PC-9 (cell line): ENCODE measurements at regions of chr13 and their contacts with region 1.

Region 1: GRCh38 chr13:45047394-45048310 is 58.3 kb downstream of the GPALPP1 start:
- DNase-seq: peak; percentile 69 to 77
- H3K4me3 ChIP-seq: peak overlapping the region; percentile 22; the same call in 1 of the 2 replicates
- H3K27ac ChIP-seq: no peak overlapping the region
- H3K4me1 ChIP-seq: no peaks in the 10 kb centered on the region
- H3K27me3 ChIP-seq: no peaks in the 10 kb centered on the region
- CTCF ChIP-seq: peak; percentile 93

Region 2: GRCh38 chr13:45073809-45074208 is 26.2 kb after region 1 on chr13:
- CTCF ChIA-PET with region 1: no interaction called
- POLR2A ChIA-PET with region 1: no interaction called
- intact Hi-C with region 1: no loop called
- DNase-seq: no peak
- H3K4me3 ChIP-seq: no peak overlapping the region
- H3K27ac ChIP-seq: no peak overlapping the region
- H3K4me1 ChIP-seq: no peaks in the 10 kb centered on the region
- H3K27me3 ChIP-seq: no peaks in the 10 kb centered on the region
- CTCF ChIP-seq: no peak

Region 3: GRCh38 chr13:45119991-45120864 is 72.6 kb after region 1 on chr13 and contains the start of gene GTF2F2:
- CTCF ChIA-PET with region 1: interaction called, 3 read pairs
- POLR2A ChIA-PET with region 1: no interaction called
- intact Hi-C with region 1: loop called (anchors 1 kb)
- DNase-seq: peak; percentile 79 to 89
- H3K4me3 ChIP-seq: peak within 1 kb of the TSS; percentile 96
- H3K27ac ChIP-seq: peak within 1 kb of the TSS; percentile 74
- H3K4me1 ChIP-seq: peaks cover 18% of the 10 kb centered on the region
- H3K27me3 ChIP-seq: no peaks in the 10 kb centered on the region
- CTCF ChIP-seq: no peak
- total RNA-seq, gene GTF2F2: 26.5 and 28.8 TPM in 2 replicates

Region 4: GRCh38 chr13:45206340-45206739 is 158.7 kb after region 1 on chr13:
- CTCF ChIA-PET with region 1: no interaction called
- POLR2A ChIA-PET with region 1: no interaction called
- intact Hi-C with region 1: loop called (anchors 5 kb)
- DNase-seq: peak in 1 of 2 experiments; percentile 92
- H3K4me3 ChIP-seq: no peak overlapping the region
- H3K27ac ChIP-seq: peak overlapping the region; percentile 85
- H3K4me1 ChIP-seq: peaks cover 45% of the 10 kb centered on the region
- H3K27me3 ChIP-seq: no peaks in the 10 kb centered on the region
- CTCF ChIP-seq: no peak

Region 5: DNA sequence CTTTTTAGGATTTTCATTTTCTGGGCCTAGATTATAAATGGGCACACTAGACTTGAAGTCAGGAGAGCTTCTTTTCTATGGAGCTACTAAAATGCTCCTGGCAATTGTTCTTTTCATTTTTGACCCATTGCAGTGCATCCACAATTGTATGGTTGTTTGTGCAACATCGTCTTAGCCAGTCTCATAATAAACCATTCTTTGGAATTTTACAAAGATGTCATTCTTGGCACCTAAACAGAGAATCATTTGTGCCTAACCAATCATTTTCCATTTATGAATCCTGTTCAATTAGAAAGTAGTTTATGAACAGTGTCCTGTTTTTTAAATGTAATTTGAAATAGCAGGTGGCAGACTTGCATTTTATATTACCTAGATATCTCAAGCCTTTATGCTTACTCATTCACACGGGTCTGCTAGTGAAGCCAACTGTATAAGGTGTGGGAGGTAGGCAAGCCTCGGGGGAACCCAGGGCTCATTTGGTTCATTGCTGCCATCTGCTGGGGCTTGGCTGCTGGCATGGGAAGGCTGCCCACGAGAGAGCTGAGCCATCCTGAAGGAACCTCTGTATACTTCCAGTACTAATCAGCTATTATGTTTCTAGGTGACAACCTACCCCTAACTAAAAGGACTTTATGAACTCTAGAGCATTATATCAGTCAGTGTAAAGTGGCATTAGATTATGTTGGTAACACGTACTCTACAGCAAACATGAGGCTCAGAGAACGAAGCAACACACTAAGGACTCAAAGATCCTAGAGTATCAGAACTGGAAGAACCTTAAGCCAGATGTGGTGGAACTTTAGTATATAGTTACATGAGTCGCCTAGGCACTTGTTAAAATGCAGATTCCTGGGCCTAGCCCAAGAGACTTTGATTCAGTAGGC is 233.3 kb after region 1 on chr13:
- CTCF ChIA-PET with region 1: interaction called, 29 read pairs
- POLR2A ChIA-PET with region 1: no interaction called
- intact Hi-C with region 1: loop called (anchors 1 kb)
- DNase-seq: peak; percentile 75 to 82
- H3K4me3 ChIP-seq: no peak overlapping the region
- H3K27ac ChIP-seq: peak overlapping the region; percentile 47
- H3K4me1 ChIP-seq: peaks cover 8% of the 10 kb centered on the region
- H3K27me3 ChIP-seq: no peaks in the 10 kb centered on the region
- CTCF ChIP-seq: peak; percentile 83

Region 6: DNA sequence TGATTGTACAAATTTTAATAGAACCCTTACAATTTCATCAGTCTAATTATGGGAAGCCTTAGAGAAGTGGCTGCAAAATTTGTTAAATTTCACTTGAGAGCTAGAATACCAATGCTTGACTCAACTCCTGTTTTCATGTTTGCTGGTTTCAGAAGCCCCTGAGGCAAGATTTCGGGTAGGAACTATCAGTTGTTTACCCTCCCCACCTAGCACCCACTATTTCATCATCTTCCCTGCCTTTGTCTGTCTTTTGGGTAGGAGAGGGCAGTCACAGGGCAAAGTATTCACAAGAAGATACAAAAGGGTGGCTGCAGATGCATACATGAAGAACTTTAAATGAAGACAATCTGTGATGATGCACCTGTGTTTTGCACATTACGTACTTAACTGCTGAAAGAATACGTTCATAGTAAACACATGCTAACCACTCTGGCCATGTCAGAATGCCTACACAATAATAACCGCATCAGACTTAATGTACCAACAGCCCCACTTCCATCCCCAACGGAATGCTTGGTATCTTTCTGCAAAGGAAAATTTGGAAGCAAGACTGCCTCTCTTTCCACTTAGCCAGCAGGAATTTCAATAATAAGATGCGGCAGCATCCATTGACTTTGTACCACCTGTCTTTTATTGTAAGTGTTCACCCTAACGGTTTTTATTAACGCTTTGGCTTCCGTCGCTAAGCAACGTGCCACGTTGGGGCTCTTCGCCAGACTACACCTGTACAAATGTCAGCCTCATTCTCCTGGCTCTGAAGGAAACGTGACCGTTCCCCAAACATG is 262.9 kb after region 1 on chr13:
- CTCF ChIA-PET with region 1: interaction called, 5 read pairs
- POLR2A ChIA-PET with region 1: no interaction called
- intact Hi-C with region 1: loop called (anchors 1 kb)
- DNase-seq: no peak
- H3K4me3 ChIP-seq: peak overlapping the region; percentile 43; the same call in 1 of the 2 replicates
- H3K27ac ChIP-seq: no peak overlapping the region
- H3K4me1 ChIP-seq: peaks cover 15% of the 10 kb centered on the region
- H3K27me3 ChIP-seq: no peaks in the 10 kb centered on the region
- CTCF ChIP-seq: no peak

Region 7: GRCh38 chr13:45393941-45394570 is 346.4 kb after region 1 on chr13:
- CTCF ChIA-PET with region 1: no interaction called
- POLR2A ChIA-PET with region 1: no interaction called
- intact Hi-C with region 1: loop called (anchors 1 kb)
- DNase-seq: peak; percentile 59 to 61
- H3K4me3 ChIP-seq: no peak overlapping the region
- H3K27ac ChIP-seq: no peak overlapping the region
- H3K4me1 ChIP-seq: no peaks in the 10 kb centered on the region
- H3K27me3 ChIP-seq: no peaks in the 10 kb centered on the region
- CTCF ChIP-seq: peak; percentile 74